Activated T-helper 1 cell treated with anti-CD3 and anti-CD28 coated beads, Interleukin-12 subunit alpha, Interleukin-12 subunit beta, Interleukin-2, Interleukin-4 antibody, amounts not matched to agents 30 ng/mL and 10 ng/mL and 1 ng/mL, durations not matched to agents 14 hours and 24 hours and 36 hours (primary cell): ENCODE measurements at regions of chr1 and their contacts with region 1.

Region 1: GRCh38 chr1:154220071-154220969 is at the start of gene UBAP2L:
- DNase-seq: peak; percentile 99
- H3K4me3 Mint-ChIP-seq: peak within 1 kb of the TSS; percentile 97
- H3K27ac Mint-ChIP-seq: peak within 1 kb of the TSS; percentile 99
- H3K4me1 Mint-ChIP-seq: peaks cover 62% of the 10 kb centered on the region
- H3K27me3 Mint-ChIP-seq: no peaks in the 10 kb centered on the region
- total RNA-seq, gene UBAP2L: 258 and 284 TPM in 2 replicates

Region 2: DNA sequence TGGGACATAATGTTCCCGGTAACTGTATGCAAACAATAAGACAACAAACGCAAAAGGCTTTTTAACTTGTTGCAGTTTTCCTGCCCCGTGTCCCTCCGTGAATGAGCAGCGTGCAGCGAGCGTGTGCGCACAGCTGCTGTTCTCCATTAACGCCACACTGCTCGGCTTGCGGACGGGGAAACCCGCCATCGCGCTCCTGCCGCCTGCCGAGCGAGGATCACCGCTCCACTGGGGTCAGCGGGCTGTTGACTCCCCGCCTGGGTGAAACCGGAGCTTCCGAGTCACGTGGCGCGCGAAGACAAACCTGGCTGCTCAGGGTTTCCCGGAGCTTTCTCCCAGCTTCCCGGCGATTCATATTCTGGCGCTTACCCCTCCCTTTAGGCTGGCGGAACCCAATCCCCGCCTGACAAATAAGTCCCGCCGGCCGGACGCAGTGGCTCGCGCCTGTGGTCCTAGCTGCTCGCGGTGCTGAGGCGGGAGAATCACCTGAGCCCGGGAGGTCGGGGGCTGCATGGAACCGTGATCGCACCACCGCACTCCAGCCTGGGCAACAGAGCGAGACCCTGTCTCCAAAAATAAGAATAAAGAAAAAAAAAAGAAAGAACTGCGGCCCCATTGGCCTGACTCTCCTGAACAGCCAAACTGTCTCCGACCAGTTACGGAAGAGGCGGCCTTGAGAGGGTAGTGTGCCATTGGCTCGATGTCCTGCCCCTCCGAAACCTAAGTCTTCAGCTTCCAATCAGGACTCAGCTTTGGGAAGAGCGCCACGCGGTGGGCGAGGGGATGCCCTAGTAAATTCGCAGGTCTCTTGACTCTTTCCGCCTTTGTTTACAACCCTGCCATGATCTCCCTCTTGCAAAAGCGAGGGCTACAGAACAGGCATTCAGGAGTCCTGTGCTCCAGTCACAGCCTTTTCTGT is 253.0 kb before region 1 on chr1 and contains the start of gene CREB3L4:
- intact Hi-C with region 1: loop called (anchors 1 kb)
- DNase-seq: peak; percentile 80
- H3K4me3 Mint-ChIP-seq: peak within 1 kb of the TSS; percentile 97
- H3K27ac Mint-ChIP-seq: peak within 1 kb of the TSS; percentile 95
- H3K4me1 Mint-ChIP-seq: peaks cover 52% of the 10 kb centered on the region
- H3K27me3 Mint-ChIP-seq: no peaks in the 10 kb centered on the region
- total RNA-seq, gene CREB3L4: 8.1 and 9.8 TPM in 2 replicates

Region 3: GRCh38 chr1:154206196-154206595 is 14.1 kb before region 1 on chr1 and contains the start of gene CFAP141:
- intact Hi-C with region 1: loop called (anchors 1 kb)
- DNase-seq: no peak
- H3K4me3 Mint-ChIP-seq: peak within 1 kb of the TSS; percentile 28
- H3K27ac Mint-ChIP-seq: peak within 1 kb of the TSS; percentile 97
- H3K4me1 Mint-ChIP-seq: peaks cover 35% of the 10 kb centered on the region
- H3K27me3 Mint-ChIP-seq: no peaks in the 10 kb centered on the region
- total RNA-seq, gene CFAP141: not detected in 2 replicates

Region 4: DNA sequence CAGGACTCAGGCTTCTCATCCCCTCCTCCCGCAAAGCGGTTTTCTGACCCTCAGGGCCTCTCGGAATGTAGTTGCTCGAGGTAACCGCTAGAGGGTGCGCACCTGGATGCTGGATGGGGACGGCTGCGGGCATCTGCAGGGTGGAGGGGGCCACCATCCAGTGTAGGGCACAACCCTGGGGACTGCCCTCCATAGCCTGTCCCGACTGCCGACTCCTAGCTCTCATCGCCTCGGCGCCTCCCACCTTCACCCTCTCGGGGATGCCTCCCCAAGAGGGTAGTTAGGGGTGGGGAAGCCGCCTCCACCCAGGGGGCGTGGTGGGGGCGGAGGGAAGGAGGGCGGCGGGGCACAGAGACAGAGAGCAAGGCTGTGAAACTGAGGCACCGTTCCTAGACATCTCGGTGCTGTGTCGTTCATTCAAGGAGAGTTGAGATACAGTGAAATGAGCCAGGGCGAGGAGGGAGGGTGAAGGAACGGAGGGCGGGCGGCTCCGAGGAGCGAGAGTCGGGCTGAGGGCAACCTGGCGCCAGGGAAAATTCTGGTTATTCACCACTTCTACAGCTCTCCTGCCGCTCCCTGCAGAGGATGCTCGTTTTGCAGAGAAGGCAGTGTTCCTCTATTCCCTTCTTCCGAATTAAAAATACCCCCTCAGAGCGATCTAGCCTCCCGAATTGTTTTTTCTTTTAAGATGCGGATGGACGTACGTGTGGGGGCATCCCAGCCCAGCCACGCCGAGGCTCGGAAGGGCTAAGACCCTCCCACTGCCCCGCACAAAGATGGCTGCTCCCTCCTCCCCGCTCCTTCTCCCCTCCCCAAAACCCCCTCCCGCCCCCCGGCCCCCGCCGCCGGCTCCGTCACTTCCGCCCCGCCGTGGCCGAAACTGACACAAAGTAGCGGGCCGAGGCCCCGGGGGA is 104.6 kb after region 1 on chr1 and contains the start of gene ATP8B2:
- intact Hi-C with region 1: loop called (anchors 1 kb)
- DNase-seq: peak; percentile 74
- H3K4me3 Mint-ChIP-seq: peak within 1 kb of the TSS; percentile 96
- H3K27ac Mint-ChIP-seq: peak within 1 kb of the TSS; percentile 89
- H3K4me1 Mint-ChIP-seq: peaks cover 35% of the 10 kb centered on the region
- H3K27me3 Mint-ChIP-seq: peaks cover 22% of the 10 kb centered on the region
- total RNA-seq, gene ATP8B2: 50.1 and 54.9 TPM in 2 replicates

Region 5: GRCh38 chr1:154974063-154974807 is 753.9 kb after region 1 on chr1 and contains the start of gene CKS1B:
- intact Hi-C with region 1: loop called (anchors 1 kb)
- DNase-seq: peak; percentile 95
- H3K4me3 Mint-ChIP-seq: no peak within 1 kb of the TSS
- H3K27ac Mint-ChIP-seq: no peak within 1 kb of the TSS
- H3K4me1 Mint-ChIP-seq: peaks cover 36% of the 10 kb centered on the region
- H3K27me3 Mint-ChIP-seq: no peaks in the 10 kb centered on the region
- total RNA-seq, gene CKS1B: 151 and 158 TPM in 2 replicates